GM12878 (cell line): ENCODE measurements at regions of chr2 and their contacts with region 1.

Region 1: DNA sequence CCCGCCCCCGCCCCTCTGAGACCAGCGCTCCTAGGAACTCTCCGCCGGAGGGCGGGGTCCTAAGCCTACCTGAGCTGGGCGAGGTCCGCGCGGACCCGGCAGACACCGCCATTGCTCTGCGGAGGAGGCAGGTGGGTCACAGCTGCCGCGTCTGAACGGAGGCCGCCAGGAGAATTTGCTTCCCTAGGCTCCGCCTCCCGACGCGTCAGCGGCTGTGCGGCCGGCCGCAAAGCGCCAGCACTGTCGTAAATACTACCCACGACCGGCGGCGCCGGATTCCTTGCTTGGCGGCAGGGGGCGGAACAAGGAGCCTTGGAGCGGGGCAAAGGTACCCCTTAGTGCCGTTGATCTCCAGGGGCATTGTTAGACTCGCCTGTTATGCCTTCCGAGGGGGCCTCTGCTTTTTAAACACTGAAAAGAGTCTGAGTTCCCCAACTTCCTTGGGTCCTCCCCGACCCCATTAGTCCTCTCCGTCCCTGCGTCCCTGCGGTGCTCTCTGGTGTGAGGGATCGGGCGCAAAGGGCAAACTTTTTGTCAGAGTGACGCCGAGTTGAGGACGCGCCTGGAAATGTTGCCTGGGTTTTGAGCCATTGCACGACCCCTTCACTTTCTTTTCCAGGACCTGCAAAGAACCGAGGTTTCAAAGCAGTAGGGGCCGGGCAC is at the start of gene GGCX:
- DNase-seq: peak; percentile 73
- ATAC-seq: peak; percentile 97
- H3K4me3 ChIP-seq: peak within 1 kb of the TSS; percentile 98
- H3K27ac ChIP-seq: peak within 1 kb of the TSS; percentile 71
- H3K4me1 ChIP-seq: no peaks in the 10 kb centered on the region; the same call in 1 of the 2 replicates
- H3K27me3 ChIP-seq: no peaks in the 10 kb centered on the region
- CTCF ChIP-seq: no peak
- EP300 ChIP-seq: 0 out of 4 replicates have a peak, but pooled peaks of 1 of the 2 experiments have one; percentile 14
- POLR2A ChIP-seq: peak; percentile 97
- RAD21 ChIP-seq: no peak
- polyA plus RNA-seq, gene GGCX: 46.6 to 52.7 TPM

Region 2: DNA sequence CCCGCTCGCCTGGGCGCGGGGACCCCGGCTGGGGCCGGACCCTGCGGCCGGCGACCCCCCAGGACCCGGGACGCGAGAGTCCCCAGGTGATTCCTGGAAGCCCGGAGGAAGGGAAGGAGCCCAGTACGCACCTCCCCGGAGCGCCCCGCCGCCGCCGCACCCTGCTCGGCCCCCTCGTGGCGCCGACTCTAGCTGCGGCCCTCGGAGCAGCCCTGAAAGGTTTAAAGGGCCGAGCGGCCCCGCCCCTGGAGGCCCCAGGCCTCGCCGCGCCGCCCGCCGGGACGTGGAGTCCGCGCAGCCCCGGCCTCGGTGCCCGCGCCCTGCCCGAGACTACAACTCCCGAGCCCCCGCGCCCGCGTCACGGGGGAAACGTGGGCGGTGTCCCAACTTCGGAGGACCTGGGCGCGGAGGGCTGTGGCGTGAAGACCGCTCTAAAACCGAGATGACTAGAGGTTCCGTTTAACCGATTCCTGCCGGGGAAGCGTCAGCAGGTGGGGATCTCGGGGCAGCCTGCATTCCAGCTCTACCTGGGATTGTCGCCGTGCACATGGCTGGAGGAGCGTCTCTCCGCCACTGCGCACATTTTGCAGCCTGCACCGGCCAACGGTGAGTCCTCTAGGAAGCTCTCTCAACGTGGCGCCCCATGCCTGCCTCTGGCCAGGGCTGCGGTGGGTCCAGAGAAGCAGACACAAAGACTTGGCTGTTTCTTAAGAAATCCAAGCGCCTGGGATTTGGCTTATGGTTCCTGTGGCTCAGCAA is 41.2 kb after region 1 on chr2 and contains the start of gene TMEM150A:
- CTCF ChIA-PET with region 1: interaction called, 3 read pairs
- POLR2A ChIA-PET with region 1: interaction called, 3 read pairs
- RAD21 ChIA-PET with region 1: no interaction called
- SMC1A ChIA-PET with region 1: no interaction called
- in situ Hi-C with region 1: no loop called
- intact Hi-C with region 1: loop called (anchors 2 kb)
- DNase-seq: peak; percentile 34
- ATAC-seq: peak; percentile 99
- H3K4me3 ChIP-seq: peak within 1 kb of the TSS; percentile 92
- H3K27ac ChIP-seq: no peak within 1 kb of the TSS
- H3K4me1 ChIP-seq: no peaks in the 10 kb centered on the region; the same call in 1 of the 2 replicates
- H3K27me3 ChIP-seq: no peaks in the 10 kb centered on the region
- CTCF ChIP-seq: peak; percentile 21 to 33 (median 27); a peak in 5 of 6 replicates
- EP300 ChIP-seq: no peak
- POLR2A ChIP-seq: peak; percentile 81
- RAD21 ChIP-seq: no peak
- polyA plus RNA-seq, gene TMEM150A: 0.45 to 1.5 TPM